Endothelial cell of umbilical vein (primary cell): ENCODE measurements at regions of chr3 and their contacts with region 1.

Region 1: DNA sequence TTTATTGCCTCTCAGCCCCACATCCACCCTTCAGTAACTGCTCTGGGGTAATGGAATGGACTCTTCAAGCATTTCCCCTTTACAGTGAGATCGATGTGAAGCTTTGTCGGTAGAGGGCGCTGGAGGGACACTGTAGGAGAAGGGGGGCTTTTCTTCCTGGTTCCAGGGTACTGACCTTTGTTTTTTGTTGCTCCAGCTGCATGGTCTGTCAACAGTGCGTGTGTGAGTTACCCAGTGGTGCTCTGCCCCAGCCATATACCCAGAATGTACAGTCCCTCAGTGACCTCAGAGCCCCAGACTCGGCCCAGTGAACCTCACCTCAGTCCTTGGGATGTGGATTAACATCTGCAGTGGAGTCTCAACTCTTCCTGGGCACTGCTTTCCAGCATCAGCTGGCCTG is 180.3 kb upstream of the TSC22D2 start:
- DNase-seq: peak; percentile 72
- H3K4me3 ChIP-seq: no peak overlapping the region
- H3K27ac ChIP-seq: no peak overlapping the region
- H3K4me1 ChIP-seq: peaks cover 27% of the 10 kb centered on the region
- H3K27me3 ChIP-seq: peaks cover 25 to 26% of the 10 kb centered on the region in 2 experiments
- CTCF ChIP-seq: peak; percentile 82 to 84
- POLR2A ChIP-seq: no peak

Region 2: GRCh38 chr3:149936812-149937233 is 291.0 kb before region 1 on chr3:
- CTCF ChIA-PET with region 1: interaction called, 42 read pairs
- POLR2A ChIA-PET with region 1: no interaction called
- dilution Hi-C with region 1: no loop called
- intact Hi-C with region 1: no loop called
- DNase-seq: peak; percentile 70
- H3K4me3 ChIP-seq: no peak overlapping the region
- H3K27ac ChIP-seq: no peak overlapping the region
- H3K4me1 ChIP-seq: peaks cover 2% of the 10 kb centered on the region
- H3K27me3 ChIP-seq: no peaks in the 10 kb centered on the region
- CTCF ChIP-seq: peak; percentile 70 to 76
- POLR2A ChIP-seq: no peak

Region 3: DNA sequence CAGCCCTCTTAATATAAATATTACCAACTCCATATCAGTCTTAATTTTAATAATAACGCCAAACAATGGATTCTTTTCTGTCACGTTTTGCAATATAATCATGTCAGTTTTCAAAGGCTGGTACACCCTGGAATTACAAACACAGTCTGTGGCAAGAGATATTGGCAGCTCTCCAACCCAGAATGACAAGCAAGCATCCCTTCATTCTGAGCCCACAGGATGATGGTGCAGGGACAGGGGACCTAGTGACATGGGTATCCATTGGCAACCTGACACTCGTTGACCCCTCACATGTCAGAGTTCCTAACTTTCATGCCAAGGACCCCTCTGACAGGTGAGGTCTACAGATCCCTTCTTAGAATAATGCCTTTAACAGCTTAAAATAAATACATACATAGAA is 25.8 kb after region 1 on chr3:
- CTCF ChIA-PET with region 1: interaction called, 6 read pairs
- POLR2A ChIA-PET with region 1: no interaction called
- dilution Hi-C with region 1: no loop called
- intact Hi-C with region 1: loop called (anchors 1 kb)
- DNase-seq: peak; percentile 57
- H3K4me3 ChIP-seq: no peak overlapping the region
- H3K27ac ChIP-seq: no peak overlapping the region
- H3K4me1 ChIP-seq: peaks cover 32% of the 10 kb centered on the region
- H3K27me3 ChIP-seq: no peaks in the 10 kb centered on the region
- CTCF ChIP-seq: no peak
- POLR2A ChIP-seq: no peak

Region 4: GRCh38 chr3:150303776-150304175 is 75.9 kb after region 1 on chr3:
- CTCF ChIA-PET with region 1: interaction called, 3 read pairs
- POLR2A ChIA-PET with region 1: no interaction called
- dilution Hi-C with region 1: no loop called
- intact Hi-C with region 1: loop called (anchors 1 kb)
- DNase-seq: no peak
- H3K4me3 ChIP-seq: no peak overlapping the region
- H3K27ac ChIP-seq: no peak overlapping the region
- H3K4me1 ChIP-seq: peaks cover 39% of the 10 kb centered on the region
- H3K27me3 ChIP-seq: no peaks in the 10 kb centered on the region
- CTCF ChIP-seq: peak; percentile 17 to 18
- POLR2A ChIP-seq: no peak

Region 5: DNA sequence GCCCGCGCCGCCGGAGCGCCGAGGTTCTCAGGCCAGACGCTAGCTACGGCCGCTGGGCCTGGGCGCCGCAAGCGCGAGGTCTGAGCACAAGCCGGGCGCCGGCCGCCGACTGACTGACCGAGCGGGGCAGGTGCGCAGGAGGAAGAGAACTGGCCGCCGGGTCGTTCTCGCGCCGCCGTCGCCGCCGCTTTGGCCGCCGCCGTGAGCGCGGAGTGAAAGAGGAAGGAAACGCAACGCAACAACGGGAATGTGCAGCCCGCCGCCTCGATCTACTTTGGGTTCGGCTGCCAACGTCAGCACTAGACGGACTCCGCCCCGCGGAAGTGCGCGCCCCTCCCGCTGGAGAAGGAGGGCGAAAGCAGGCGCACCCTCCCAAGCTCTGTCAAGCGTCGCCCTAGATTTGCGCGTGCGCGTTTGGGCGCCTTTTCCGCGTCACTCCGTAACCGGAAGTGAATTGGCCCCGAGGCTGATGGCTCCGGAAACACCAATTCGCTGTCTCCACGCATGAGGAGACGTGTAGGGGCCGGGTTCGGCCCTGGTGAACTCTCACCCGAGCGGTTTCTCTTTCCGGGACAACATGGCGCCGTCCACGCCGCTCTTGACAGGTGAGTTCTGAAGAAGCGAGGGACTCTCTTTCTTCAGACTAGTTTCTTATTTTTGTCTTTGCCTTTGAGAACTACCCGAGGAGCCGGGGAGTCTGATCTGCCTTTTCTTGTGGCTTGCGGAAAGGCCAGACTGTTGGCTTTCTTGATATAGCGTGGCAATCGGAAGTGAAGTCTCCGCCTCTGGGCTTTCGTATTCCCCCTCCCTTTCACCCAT is 318.6 kb after region 1 on chr3 and contains the starts of genes EIF2A and SERP1:
- CTCF ChIA-PET with region 1: interaction called, 4 read pairs
- POLR2A ChIA-PET with region 1: no interaction called
- dilution Hi-C with region 1: no loop called
- intact Hi-C with region 1: loop called (anchors 2 kb)
- DNase-seq: peak; percentile 100
- H3K4me3 ChIP-seq: peak within 1 kb of the TSS; percentile 80 to 98 (median 93)
- H3K27ac ChIP-seq: peak within 1 kb of the TSS; percentile 97
- H3K4me1 ChIP-seq: peaks cover 25% of the 10 kb centered on the region
- H3K27me3 ChIP-seq: no peaks in the 10 kb centered on the region
- CTCF ChIP-seq: no peak
- POLR2A ChIP-seq: peak; percentile 85
- total RNA-seq, gene EIF2A: 97.6 and 104 TPM in 2 replicates
- total RNA-seq, gene SERP1: 81.7 and 82.0 TPM in 2 replicates